ENCODE measurements at regions of chr22 and their contacts with region 1.

Region 1: DNA sequence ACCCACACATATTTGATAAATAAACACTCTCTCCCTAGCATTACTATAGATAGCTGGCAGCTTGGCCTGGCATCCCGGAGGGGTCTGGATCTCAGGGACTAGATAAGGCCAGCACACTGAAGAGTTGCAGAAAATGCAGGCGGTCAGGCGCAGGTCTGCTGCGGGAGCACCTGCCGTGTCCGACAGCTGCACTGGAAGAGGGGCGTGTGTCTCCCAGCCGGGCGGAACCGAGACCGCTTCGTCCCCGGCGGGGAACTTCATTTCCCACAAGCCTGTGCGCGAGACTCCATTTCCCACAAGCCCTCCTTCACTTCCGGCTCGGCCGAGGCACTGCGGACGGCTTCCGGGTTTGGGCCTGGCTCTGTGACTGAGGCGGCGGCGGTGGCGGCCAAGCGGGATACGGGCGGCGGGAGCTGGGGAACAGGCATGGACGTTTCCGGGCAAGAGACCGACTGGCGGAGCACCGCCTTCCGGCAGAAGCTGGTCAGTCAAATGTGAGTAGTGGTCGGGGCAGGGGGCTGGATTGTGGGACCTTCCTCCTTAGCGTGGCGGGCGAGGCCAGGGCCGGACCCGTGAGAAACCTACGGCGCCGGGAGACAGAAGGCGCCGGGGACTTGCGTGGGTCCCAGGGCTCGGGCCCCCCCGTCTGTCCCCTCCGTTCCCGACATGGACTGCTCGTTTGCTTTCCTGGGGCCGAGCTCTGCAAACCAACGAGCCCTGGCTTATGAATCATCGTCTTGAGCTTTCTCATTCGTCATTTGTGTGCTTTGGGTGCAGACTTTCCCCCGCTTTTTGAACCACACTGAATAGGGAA is at the start of gene MED15:
- DNase-seq: peak; percentile 95
- H3K4me3 ChIP-seq: peak within 1 kb of the TSS; percentile 89
- H3K27ac ChIP-seq: peak within 1 kb of the TSS; percentile 95
- H3K4me1 ChIP-seq: peaks cover 22% of the 10 kb centered on the region
- H3K27me3 ChIP-seq: no peaks in the 10 kb centered on the region
- CTCF ChIP-seq: no peak
- total RNA-seq, gene MED15: 96.2 and 101 TPM in 2 replicates

Region 2: DNA sequence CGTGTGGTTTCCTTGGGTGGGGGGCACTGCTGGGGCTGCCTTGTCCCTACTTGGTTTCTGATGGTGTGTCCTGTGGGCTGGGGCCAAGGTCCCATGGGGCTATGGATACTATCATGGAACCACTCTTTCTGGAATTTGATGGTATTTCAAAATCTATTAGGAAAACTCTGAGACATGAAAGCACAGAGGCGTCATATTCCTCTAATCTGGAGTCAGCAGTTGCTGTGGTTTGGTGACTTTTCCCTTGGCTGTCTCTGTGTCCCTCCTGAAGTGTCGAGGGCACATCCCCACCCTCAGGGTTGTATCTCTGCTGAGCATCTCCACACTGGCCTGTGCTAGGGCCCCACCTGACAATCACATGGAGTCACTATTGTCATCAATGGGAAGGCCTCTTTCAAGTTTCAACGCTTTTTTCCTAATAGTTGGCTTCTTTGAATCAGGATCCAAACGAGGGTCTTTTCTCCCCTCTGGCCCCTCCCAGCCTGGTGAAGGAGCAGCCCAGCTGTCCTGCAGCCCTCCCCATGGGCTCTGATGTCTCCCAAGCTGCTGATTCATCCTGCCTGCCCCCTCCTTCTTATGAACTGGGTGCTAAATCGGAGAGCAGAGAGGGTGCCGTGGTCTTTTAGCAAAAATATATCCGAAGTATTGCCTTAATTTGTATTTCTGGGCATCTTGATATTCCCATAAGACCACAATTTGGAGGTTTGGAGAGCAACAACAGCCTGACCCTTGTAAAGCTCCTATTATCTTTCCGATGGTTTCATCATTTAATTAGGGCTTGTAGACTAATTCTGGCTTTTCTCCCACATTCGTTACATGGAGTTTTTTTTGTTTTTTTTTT is 38.4 kb after region 1 on chr22:
- CTCF ChIA-PET with region 1: no interaction called
- POLR2A ChIA-PET with region 1: interaction called, 16 read pairs
- intact Hi-C with region 1: no loop called
- DNase-seq: no peak
- H3K4me3 ChIP-seq: no peak overlapping the region
- H3K27ac ChIP-seq: peak overlapping the region; percentile 64
- H3K4me1 ChIP-seq: peaks cover 30% of the 10 kb centered on the region
- H3K27me3 ChIP-seq: no peaks in the 10 kb centered on the region
- CTCF ChIP-seq: no peak

Measured in A673 (cell line).